Adrenal gland (tissue), 19 donors: ENCODE measurements at regions of chr1 and their contacts with region 1.

Region 1: GRCh38 chr1:92310185-92310597 is 11.3 kb downstream of the RPAP2 start:
- DNase-seq: no peak
- H3K4me3 ChIP-seq: no peak overlapping the region
- H3K27ac ChIP-seq: no peak overlapping the region
- H3K4me1 ChIP-seq: no peaks in the 10 kb centered on the region
- H3K27me3 ChIP-seq: no peaks in the 10 kb centered on the region
- CTCF ChIP-seq: peak; percentile 28 to 69 (median 53)
- POLR2A ChIP-seq: no peak

Region 2: GRCh38 chr1:92273039-92273438 is 37.2 kb before region 1 on chr1:
- intact Hi-C with region 1: no loop called
- DNase-seq: no peak
- H3K4me3 ChIP-seq: no peak overlapping the region
- H3K27ac ChIP-seq: no peak overlapping the region
- H3K4me1 ChIP-seq: no peaks in the 10 kb centered on the region
- H3K27me3 ChIP-seq: no peaks in the 10 kb centered on the region
- CTCF ChIP-seq: no peak
- POLR2A ChIP-seq: no peak

Region 3: GRCh38 chr1:92536980-92537884 is 227.0 kb after region 1 on chr1:
- intact Hi-C with region 1: no loop called
- DNase-seq: no peak
- H3K4me3 ChIP-seq: no peak overlapping the region
- H3K27ac ChIP-seq: no peak overlapping the region
- H3K4me1 ChIP-seq: peaks cover 27 to 29% of the 10 kb centered on the region in 2 donors
- H3K27me3 ChIP-seq: no peaks in the 10 kb centered on the region
- CTCF ChIP-seq: no peak
- POLR2A ChIP-seq: no peak

Region 4: DNA sequence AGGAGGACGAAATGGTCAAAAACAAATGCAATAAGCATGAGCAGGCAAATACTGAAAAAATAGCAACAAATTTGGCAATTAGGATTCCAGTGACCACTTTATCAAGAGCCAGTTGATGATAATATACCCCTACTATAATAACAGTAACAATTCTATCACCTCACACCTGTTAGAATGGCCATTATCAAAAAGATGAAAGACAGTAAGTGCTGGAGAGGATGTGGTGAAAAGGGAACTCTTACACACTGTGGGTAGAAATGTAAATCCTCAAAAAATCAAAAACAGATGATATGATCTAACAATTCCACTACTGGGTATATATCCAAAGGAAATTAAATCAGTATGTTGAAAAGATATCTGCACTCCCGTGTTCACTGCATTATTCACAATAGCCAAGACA is 290.9 kb after region 1 on chr1:
- intact Hi-C with region 1: loop called in 1 of 2 experiments (anchors 5 kb)
- DNase-seq: no peak
- H3K4me3 ChIP-seq: no peak overlapping the region
- H3K27ac ChIP-seq: no peak overlapping the region
- H3K4me1 ChIP-seq: no peaks in the 10 kb centered on the region
- H3K27me3 ChIP-seq: no peaks in the 10 kb centered on the region
- CTCF ChIP-seq: no peak
- POLR2A ChIP-seq: no peak